Mammary epithelial cell (primary cell): ENCODE measurements at regions of chr15 and their contacts with region 1.

Region 1: GRCh38 chr15:87557881-87558280 is 698.7 kb downstream of the NTRK3 start:
- DNase-seq: peak; percentile 30
- H3K4me3 ChIP-seq: no peak overlapping the region
- H3K27ac ChIP-seq: no peak overlapping the region
- H3K4me1 ChIP-seq: peaks cover 7% of the 10 kb centered on the region
- H3K27me3 ChIP-seq: no peaks in the 10 kb centered on the region
- CTCF ChIP-seq: no peak

Region 2: GRCh38 chr15:87450314-87450713 is 107.6 kb before region 1 on chr15:
- CTCF ChIA-PET with region 1: interaction called, 13 read pairs
- dilution Hi-C with region 1: no loop called
- in situ Hi-C with region 1: no loop called
- intact Hi-C with region 1: no loop called
- DNase-seq: no peak
- H3K4me3 ChIP-seq: no peak overlapping the region
- H3K27ac ChIP-seq: no peak overlapping the region
- H3K4me1 ChIP-seq: no peaks in the 10 kb centered on the region
- H3K27me3 ChIP-seq: no peaks in the 10 kb centered on the region
- CTCF ChIP-seq: no peak

Region 3: DNA sequence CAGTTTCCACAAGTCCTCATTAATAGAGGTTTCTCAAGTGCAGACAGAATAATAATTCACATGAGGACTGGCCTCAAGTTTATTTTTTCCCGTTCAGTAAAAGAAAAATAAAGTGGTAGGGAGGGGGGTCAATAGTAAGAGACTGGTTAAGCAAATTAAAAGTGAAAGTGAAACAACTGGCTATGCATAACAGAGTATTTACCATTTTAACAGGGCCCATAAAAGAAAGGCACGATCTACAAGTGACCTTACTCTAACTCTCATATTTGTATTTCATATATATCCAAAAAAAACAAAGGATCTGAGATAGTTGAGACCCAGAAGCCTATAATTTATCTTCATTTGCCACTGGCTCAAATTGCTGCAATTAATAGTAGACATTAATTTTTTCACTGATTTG is 12.3 kb after region 1 on chr15:
- CTCF ChIA-PET with region 1: interaction called, 14 read pairs
- dilution Hi-C with region 1: no loop called
- in situ Hi-C with region 1: no loop called
- intact Hi-C with region 1: no loop called
- DNase-seq: no peak
- H3K4me3 ChIP-seq: no peak overlapping the region
- H3K27ac ChIP-seq: no peak overlapping the region
- H3K4me1 ChIP-seq: peaks cover 35% of the 10 kb centered on the region
- H3K27me3 ChIP-seq: no peaks in the 10 kb centered on the region
- CTCF ChIP-seq: no peak